ENCODE measurements at regions of chr5 and their contacts with region 1.

Region 1: GRCh38 chr5:107571621-107572536 is 98.9 kb downstream of the EFNA5 start:
- DNase-seq: peak; percentile 90
- ATAC-seq: peak; percentile 95
- H3K4me3 ChIP-seq: peak overlapping the region; percentile 49 to 74
- H3K27ac ChIP-seq: peak overlapping the region; percentile 95
- H3K4me1 ChIP-seq: peaks cover 49% of the 10 kb centered on the region
- H3K27me3 ChIP-seq: no peaks in the 10 kb centered on the region
- CTCF ChIP-seq: peak; percentile 91

Region 2: DNA sequence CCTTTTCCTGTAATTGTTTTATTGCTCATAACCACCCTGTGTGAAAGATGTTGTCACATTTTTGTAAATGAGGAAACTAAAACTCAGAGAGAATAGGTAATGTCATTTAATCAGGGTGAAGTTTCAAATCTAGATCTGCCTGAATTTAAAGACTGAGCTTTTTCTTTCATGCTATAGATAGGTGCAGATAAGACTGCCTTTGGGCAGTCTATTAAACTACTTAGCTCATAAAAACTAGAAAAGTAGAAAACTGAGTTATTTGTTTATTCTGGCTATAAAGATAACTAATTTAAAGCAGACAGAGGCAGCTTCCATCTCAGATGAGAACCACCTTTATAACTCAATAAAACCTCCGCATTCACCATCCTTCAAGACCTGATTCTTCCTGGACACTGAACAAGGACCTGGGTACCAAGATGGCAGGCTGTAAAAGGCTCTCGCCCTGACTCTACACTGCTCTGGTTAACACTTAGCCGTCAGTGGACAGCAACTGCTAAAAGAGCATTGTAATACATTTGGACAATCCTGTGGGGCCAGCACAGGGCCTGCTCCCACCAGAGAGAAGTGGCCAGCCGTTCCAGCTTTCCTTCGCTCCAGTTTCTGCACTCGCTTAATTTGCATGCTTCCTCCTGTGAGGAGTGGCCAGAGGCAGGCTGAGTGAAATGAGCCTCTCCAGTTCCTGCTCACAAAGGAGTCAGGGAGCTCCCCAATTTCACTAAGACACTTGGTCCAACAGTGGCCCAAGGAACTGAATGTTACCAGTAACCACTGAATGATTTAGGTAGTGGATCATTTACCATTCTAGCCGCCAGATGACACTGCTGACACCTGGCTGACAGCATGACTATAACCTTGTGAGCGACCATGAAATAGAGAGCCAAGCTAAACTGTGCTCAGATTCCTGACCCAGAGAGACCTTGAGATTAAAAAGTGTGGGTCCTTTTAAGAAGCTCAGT is 467.6 kb before region 1 on chr5:
- CTCF ChIA-PET with region 1: no interaction called
- POLR2A ChIA-PET with region 1: no interaction called
- in situ Hi-C with region 1: no loop called
- intact Hi-C with region 1: loop called (anchors 10 kb)
- DNase-seq: peak; percentile 50
- ATAC-seq: peak; percentile 94
- H3K4me3 ChIP-seq: no peak overlapping the region
- H3K27ac ChIP-seq: no peak overlapping the region
- H3K4me1 ChIP-seq: no peaks in the 10 kb centered on the region
- H3K27me3 ChIP-seq: no peaks in the 10 kb centered on the region
- CTCF ChIP-seq: peak; percentile 79

Region 3: GRCh38 chr5:107436201-107436600 is 135.7 kb before region 1 on chr5:
- CTCF ChIA-PET with region 1: no interaction called
- POLR2A ChIA-PET with region 1: no interaction called
- in situ Hi-C with region 1: no loop called
- intact Hi-C with region 1: loop called (anchors 5 kb)
- DNase-seq: no peak
- ATAC-seq: no peak
- H3K4me3 ChIP-seq: no peak overlapping the region
- H3K27ac ChIP-seq: no peak overlapping the region
- H3K4me1 ChIP-seq: peaks cover 24% of the 10 kb centered on the region
- H3K27me3 ChIP-seq: no peaks in the 10 kb centered on the region
- CTCF ChIP-seq: no peak